ENCODE measurements at regions of chr4 and their contacts with region 1.

Region 1: DNA sequence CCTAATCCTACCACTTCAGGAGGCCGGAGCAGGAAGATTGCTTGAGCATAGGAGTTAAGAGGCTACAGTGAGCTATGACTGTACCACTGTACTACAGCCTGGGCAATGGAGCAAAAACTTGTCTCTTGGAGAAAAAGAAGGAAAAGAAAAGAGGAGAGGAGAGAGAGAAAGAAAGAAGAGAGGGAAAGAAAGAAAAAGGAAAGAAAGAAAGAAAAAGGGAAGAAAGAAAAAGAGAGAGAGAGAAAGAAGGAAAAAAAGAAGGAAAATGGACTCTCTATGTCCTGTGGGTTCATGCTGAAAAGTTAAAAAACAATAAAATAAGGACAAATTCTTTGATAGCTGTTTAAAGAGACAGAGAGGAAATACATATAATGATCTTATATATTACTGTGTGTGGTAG is 13.3 kb upstream of the ABRAXAS1 start:
- DNase-seq: no peak
- H3K4me3 ChIP-seq: no peak overlapping the region
- CTCF ChIP-seq: no peak

Region 2: DNA sequence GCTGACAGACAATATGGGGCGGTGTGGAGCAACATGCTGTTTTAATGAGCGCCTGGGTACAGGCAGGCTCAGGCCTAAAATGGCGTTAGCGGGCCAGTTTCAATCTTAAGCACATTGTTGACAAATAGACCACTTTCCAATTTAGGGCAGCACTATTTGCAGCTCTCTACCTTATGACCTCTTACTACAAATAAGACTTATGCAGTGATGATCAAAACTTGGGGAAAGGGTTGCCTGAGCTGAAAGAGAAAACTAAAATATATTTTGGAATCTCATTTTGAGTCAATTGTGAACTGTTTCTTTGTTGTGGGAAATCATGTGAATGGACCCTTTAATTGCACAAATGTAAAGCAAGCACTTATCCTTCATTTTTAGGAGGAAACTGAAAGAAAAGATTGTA is 12.3 kb after region 1 on chr4:
- CTCF ChIA-PET with region 1: interaction called, 19 read pairs
- POLR2A ChIA-PET with region 1: no interaction called
- DNase-seq: no peak
- H3K4me3 ChIP-seq: no peak overlapping the region
- CTCF ChIP-seq: no peak